ENCODE measurements at regions of chr20 and their contacts with region 1.

Region 1: GRCh38 chr20:24992487-24993205 is at the start of gene APMAP:
- DNase-seq: peak; percentile 98 to 99
- H3K4me3 ChIP-seq: peak within 1 kb of the TSS; percentile 82 to 90 (median 88)
- H3K27ac ChIP-seq: peak within 1 kb of the TSS; percentile 85 to 97 (median 95)
- H3K4me1 ChIP-seq: peaks cover 24 to 54% (median 40%) of the 10 kb centered on the region in 4 donors
- H3K27me3 ChIP-seq: no peaks in the 10 kb centered on the region
- CTCF ChIP-seq: no peak
- EP300 ChIP-seq: no peak
- POLR2A ChIP-seq: peak in 3 of 4 donors; percentile 20 to 95 (median 94)
- total RNA-seq, gene APMAP: 12.3 to 55.6 (median 39.3) TPM

Region 2: DNA sequence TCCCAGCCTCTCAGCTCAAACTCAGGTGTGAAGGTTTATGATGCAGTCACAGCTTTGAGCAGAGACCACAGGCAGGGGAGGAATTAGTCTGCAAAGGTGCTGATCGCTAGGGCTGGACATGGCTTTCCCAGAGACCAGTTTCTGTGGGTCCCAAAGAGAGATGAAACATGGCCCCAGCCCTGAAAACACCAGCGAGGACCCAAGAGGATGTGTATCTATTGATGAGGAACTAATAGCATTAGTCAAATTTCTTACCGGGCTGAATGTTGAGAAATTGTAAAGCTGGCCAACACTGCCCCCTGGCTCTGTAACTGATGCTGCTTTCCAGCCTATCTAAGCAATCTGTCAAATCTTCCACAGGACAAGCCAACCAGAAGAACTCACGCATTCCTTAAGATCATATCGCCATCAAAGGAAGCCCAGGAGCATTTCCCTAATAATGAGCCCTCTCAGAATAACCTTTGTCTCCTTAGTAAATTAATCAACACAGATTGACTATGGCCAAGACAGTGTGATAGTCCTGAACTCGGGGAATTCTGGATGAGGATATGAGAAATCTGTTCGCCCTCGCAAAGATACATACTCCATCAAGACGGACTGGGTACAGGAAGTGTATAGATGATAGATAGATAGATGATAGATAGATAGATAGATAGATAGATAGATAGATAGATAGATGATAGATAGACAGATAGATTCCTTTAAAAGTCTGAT is 73.1 kb after region 1 on chr20:
- intact Hi-C with region 1: loop called (anchors 2 kb)
- DNase-seq: peak; percentile 73 to 86
- H3K4me3 ChIP-seq: no peak overlapping the region
- H3K27ac ChIP-seq: no peak overlapping the region
- H3K4me1 ChIP-seq: peaks cover 5 to 24% (median 18%) of the 10 kb centered on the region in 4 donors
- H3K27me3 ChIP-seq: peaks cover 0 to 12% (median 0%) of the 10 kb centered on the region in 3 donors
- CTCF ChIP-seq: peak in 5 of 7 experiments; percentile 55 to 91 (median 78)
- EP300 ChIP-seq: no peak
- POLR2A ChIP-seq: no peak

Region 3: GRCh38 chr20:25160467-25160866 is 167.8 kb after region 1 on chr20:
- intact Hi-C with region 1: no loop called
- DNase-seq: no peak
- H3K4me3 ChIP-seq: no peak overlapping the region
- H3K27ac ChIP-seq: no peak overlapping the region
- H3K4me1 ChIP-seq: no peaks in the 10 kb centered on the region
- H3K27me3 ChIP-seq: peaks cover 0 to 4% (median 0%) of the 10 kb centered on the region in 3 donors
- CTCF ChIP-seq: no peak
- EP300 ChIP-seq: no peak
- POLR2A ChIP-seq: no peak

Region 4: DNA sequence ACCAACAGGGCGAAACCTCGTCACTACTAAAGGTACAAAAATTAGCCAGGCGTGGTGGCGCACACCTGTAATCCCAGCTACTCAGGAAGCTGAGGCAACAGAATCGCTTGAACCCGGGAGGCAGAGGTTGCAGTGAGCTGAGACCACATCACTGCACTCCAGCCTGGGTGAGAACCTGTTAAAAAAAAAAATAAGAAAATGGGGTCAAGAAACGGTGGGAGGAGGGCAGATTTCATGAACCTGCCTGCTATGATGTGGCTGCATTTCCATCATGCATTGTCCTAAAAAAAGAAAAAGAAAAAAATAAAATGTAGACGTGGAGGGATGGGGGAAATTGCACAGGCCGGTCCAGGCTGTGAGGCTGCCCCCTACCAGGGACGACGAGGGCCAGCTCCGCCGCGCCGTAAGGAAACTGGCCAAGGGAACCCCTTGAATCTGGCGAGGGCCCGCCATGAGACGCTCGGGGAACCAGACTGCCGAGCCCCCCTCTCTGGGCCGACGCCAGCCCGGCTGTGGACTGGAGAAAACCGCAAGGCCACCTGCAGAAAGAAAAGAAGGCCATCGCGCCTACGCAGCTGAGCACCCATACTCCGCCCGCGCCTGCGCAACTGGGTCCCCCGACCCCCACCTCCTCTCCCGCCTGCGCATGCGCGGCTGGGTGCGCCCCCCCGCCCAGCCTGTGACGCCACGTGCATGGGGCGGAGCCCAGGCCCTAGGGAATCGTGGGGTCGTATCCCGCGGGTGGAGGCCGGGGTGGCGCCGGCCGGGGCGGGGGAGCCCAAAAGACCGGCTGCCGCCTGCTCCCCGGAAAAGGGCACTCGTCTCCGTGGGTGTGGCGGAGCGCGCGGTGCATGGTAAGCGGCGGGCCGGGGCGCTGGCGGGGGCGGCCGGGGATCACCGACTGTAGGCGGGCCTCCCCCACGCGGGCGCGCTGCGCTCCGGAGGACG is 202.6 kb after region 1 on chr20 and contains the start of gene ENTPD6:
- intact Hi-C with region 1: loop called (anchors 10 kb)
- DNase-seq: peak; percentile 94 to 97
- H3K4me3 ChIP-seq: peak within 1 kb of the TSS; percentile 72 to 98 (median 96)
- H3K27ac ChIP-seq: peak within 1 kb of the TSS; percentile 88 to 93 (median 93)
- H3K4me1 ChIP-seq: peaks cover 22 to 50% (median 43%) of the 10 kb centered on the region in 4 donors
- H3K27me3 ChIP-seq: no peaks in the 10 kb centered on the region
- CTCF ChIP-seq: peak in 2 of 7 experiments; percentile 4 to 39
- EP300 ChIP-seq: no peak
- POLR2A ChIP-seq: peak in 2 of 4 donors; percentile 20 to 74
- total RNA-seq, gene ENTPD6: 44.2 to 110 (median 104) TPM